SK-N-SH (cell line): ENCODE measurements at regions of chr13 and their contacts with region 1.

Region 1: GRCh38 chr13:79382545-79383289 is 23.3 kb downstream of the RBM26 start:
- DNase-seq: no peak
- H3K4me3 ChIP-seq: no peak overlapping the region
- H3K27ac ChIP-seq: peak overlapping the region in 1 of 2 experiments; percentile 25; a peak in 1 of 4 replicates
- H3K4me1 ChIP-seq: peaks cover 0 to 14% of the 10 kb centered on the region in 2 experiments; a peak in 2 of 4 replicates
- H3K27me3 ChIP-seq: no peaks in the 10 kb centered on the region
- CTCF ChIP-seq: no peak
- EP300 ChIP-seq: no peak
- RAD21 ChIP-seq: no peak

Region 2: GRCh38 chr13:79393564-79394249 is 11.0 kb after region 1 on chr13:
- CTCF ChIA-PET with region 1: interaction called, 22 read pairs
- POLR2A ChIA-PET with region 1: no interaction called
- DNase-seq: no peak
- H3K4me3 ChIP-seq: no peak overlapping the region
- H3K27ac ChIP-seq: no peak overlapping the region; a peak in 1 of 4 replicates
- H3K4me1 ChIP-seq: peaks cover 0 to 2% of the 10 kb centered on the region in 2 experiments; a peak in 3 of 4 replicates
- H3K27me3 ChIP-seq: no peaks in the 10 kb centered on the region
- CTCF ChIP-seq: no peak
- EP300 ChIP-seq: no peak
- RAD21 ChIP-seq: no peak